Mucosa of descending colon (tissue), 3 donors: ENCODE measurements at regions of chr21 and their contacts with region 1.

Region 1: DNA sequence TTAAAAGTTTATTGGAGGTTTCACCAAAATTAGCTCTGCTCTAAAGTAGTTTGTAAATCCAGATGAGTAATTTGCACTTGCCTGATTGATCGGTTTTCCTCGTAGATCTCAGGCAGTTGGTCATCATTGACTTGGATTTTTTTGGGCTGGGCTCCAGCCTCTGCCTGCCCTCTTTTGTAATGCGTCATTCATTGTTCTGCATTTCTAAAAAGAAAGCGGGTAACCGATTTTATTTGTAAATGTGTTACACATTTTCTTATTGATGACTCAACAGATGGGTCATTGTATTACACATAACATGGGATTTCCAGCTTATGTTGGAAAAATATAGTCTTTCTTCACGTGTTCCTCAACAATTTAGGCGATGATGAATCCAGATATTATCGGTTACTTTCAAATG is 5.5 kb downstream of the ETS2 start:
- DNase-seq: peak in 1 of 3 donors; percentile 32
- ATAC-seq: peak; percentile 4
- H3K4me3 ChIP-seq: no peak overlapping the region
- H3K4me1 ChIP-seq: peaks cover 41% of the 10 kb centered on the region
- CTCF ChIP-seq: no peak

Region 2: GRCh38 chr21:38958940-38959691 is 147.9 kb after region 1 on chr21:
- intact Hi-C with region 1: loop called in 1 of 2 experiments (anchors 10 kb)
- DNase-seq: peak in 2 of 3 donors; percentile 49 to 54
- ATAC-seq: peak; percentile 42
- H3K4me3 ChIP-seq: no peak overlapping the region
- H3K4me1 ChIP-seq: peaks cover 45% of the 10 kb centered on the region
- CTCF ChIP-seq: no peak